ENCODE measurements at regions of chr19 and their contacts with region 1.

Region 1: DNA sequence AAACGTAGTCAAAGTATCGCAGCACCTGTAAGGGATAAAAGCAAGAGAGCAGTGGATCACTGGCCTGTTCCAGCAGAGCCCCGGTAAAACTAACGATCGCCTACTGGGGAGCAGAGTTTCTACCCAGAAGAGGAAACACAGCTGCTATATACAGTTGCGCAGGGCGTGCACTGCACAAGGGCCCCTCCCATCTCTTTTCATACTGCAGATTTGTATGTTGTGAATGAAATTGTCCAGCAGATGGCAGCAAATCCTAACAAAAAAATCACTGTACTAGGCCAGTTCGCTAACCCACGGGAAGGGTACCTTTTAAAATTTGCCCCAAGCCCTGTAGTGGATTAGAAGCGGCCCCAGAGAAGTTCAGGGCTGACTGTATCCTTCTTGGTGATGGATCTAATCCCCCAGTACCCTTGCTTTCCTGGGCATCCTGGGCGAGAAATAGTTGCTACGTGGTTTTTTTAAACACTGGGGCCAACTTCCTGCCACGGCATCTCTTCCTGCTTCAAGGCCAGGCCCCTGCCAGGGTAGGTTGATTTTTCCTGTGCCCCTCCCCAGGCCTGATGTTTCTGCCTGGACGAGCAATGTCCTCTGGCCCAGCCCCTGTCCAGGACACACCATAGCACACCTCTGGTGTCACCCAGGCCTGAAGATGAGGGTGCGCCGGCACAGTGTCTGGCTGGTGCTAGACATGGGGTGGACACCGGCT is 127.0 kb downstream of the IER2 start:
- DNase-seq: peak; percentile 89
- ATAC-seq: peak; percentile 94
- H3K4me3 ChIP-seq: peak overlapping the region in 2 of 5 experiments; percentile 25 to 42
- H3K4me3 Mint-ChIP-seq: peak overlapping the region; percentile 59
- H3K27ac ChIP-seq: peak overlapping the region; percentile 29 to 62
- H3K27ac Mint-ChIP-seq: peak overlapping the region; percentile 87
- H3K4me1 ChIP-seq: peaks cover 6 to 11% of the 10 kb centered on the region in 2 donors
- H3K4me1 Mint-ChIP-seq: peaks cover 17% of the 10 kb centered on the region
- H3K27me3 ChIP-seq: peaks cover 0 to 7% (median under 1%) of the 10 kb centered on the region in 4 experiments
- H3K27me3 Mint-ChIP-seq: peaks cover 17% of the 10 kb centered on the region
- CTCF ChIP-seq: peak; percentile 69

Region 2: GRCh38 chr19:13150187-13150930 is 126.9 kb before region 1 on chr19 and contains the starts of genes IER2 and STX10:
- CTCF ChIA-PET with region 1: interaction called, 5 read pairs
- POLR2A ChIA-PET with region 1: interaction called, 3 read pairs
- intact Hi-C with region 1: loop called (anchors 5 kb)
- DNase-seq: peak; percentile 96
- ATAC-seq: peak; percentile 53
- H3K4me3 ChIP-seq: peak within 1 kb of the TSS; percentile 82 to 100 (median 98)
- H3K4me3 Mint-ChIP-seq: peak within 1 kb of the TSS; percentile 92
- H3K27ac ChIP-seq: peak within 1 kb of the TSS; percentile 87 to 96
- H3K27ac Mint-ChIP-seq: peak within 1 kb of the TSS; percentile 94
- H3K4me1 ChIP-seq: peaks cover 9 to 32% of the 10 kb centered on the region in 2 donors
- H3K4me1 Mint-ChIP-seq: peaks cover 33% of the 10 kb centered on the region
- H3K27me3 ChIP-seq: no peaks in the 10 kb centered on the region
- H3K27me3 Mint-ChIP-seq: no peaks in the 10 kb centered on the region
- CTCF ChIP-seq: peak; percentile 66
- total RNA-seq, gene IER2: 181 and 189 TPM in 2 replicates
- total RNA-seq, gene STX10: 48.4 and 59.0 TPM in 2 replicates

Region 3: DNA sequence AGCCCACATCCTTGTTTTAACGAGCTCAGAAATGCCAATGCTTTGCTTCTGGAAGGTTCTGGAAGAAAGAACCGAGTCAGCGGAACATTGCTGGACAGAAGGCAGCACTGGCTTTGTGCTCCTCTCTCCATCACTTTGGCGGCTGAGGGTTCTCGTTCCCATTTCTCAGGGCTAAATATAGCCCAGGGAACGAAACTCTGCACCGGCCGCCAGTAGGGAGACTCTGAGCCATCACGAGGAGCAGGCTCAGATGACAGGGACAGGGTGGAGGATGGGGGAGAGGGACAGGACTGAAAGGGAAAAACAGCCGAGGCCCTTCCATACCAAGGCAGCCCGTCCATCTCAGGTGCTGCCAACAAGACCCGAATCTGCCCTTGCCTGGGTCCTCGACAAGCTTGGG is 62.6 kb after region 1 on chr19:
- CTCF ChIA-PET with region 1: no interaction called
- POLR2A ChIA-PET with region 1: no interaction called
- intact Hi-C with region 1: no loop called
- DNase-seq: no peak
- ATAC-seq: no peak
- H3K4me3 ChIP-seq: no peak overlapping the region
- H3K4me3 Mint-ChIP-seq: no peak overlapping the region
- H3K27ac ChIP-seq: no peak overlapping the region
- H3K27ac Mint-ChIP-seq: no peak overlapping the region
- H3K4me1 ChIP-seq: no peaks in the 10 kb centered on the region
- H3K4me1 Mint-ChIP-seq: no peaks in the 10 kb centered on the region
- H3K27me3 ChIP-seq: peaks cover 0 to 6% (median 0%) of the 10 kb centered on the region in 4 experiments
- H3K27me3 Mint-ChIP-seq: peaks cover 38% of the 10 kb centered on the region
- CTCF ChIP-seq: no peak

Region 4: GRCh38 chr19:13408889-13409518 is 131.7 kb after region 1 on chr19:
- CTCF ChIA-PET with region 1: no interaction called
- POLR2A ChIA-PET with region 1: no interaction called
- intact Hi-C with region 1: no loop called
- DNase-seq: no peak
- ATAC-seq: no peak
- H3K4me3 ChIP-seq: no peak overlapping the region
- H3K4me3 Mint-ChIP-seq: no peak overlapping the region
- H3K27ac ChIP-seq: no peak overlapping the region
- H3K27ac Mint-ChIP-seq: no peak overlapping the region
- H3K4me1 ChIP-seq: no peaks in the 10 kb centered on the region
- H3K4me1 Mint-ChIP-seq: no peaks in the 10 kb centered on the region
- H3K27me3 ChIP-seq: no peaks in the 10 kb centered on the region
- H3K27me3 Mint-ChIP-seq: peaks cover 15% of the 10 kb centered on the region
- CTCF ChIP-seq: no peak

Region 5: DNA sequence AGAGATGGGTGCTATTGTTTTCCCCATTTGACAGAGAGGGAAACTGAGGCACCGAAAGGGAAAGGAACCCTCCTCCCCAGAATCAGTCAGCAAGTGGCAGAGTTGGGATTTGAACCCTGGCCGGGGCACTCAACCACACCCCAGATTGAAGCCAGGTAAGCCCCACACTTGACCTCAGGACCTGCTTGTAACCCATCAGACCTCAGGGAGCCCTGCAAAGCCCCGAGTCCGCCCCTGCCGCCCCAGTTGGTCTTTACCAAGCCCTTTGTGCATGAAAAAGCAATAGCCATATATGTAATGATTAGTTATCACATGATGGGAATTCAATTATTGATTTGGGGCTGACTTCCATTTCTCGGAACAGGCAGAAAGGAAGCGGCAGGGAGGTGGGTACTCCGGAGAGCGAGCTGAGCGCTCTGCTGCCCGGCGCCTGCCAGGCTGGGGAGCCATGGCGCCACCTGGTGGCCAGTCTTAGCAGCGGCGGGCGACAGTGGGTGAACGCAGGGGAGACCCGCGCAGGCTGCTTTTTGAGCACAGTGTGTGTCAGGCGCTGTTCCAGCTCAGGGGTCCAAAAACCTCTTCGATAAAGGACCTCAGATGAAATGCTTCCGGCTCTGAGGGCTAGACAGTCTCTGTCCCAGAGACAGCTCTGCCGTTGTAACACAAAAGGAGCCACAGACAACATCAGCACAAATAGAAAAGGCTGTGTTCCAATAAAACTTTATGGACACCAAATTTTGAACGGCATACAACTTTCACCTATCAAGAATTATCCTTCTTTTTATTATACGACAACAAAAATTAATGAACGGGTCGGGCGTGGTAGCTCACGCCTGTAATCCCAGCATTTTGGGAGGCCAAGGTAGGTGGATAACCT is 311.9 kb after region 1 on chr19:
- CTCF ChIA-PET with region 1: interaction called, 73 read pairs
- POLR2A ChIA-PET with region 1: no interaction called
- intact Hi-C with region 1: no loop called
- DNase-seq: peak; percentile 85
- ATAC-seq: peak; percentile 99
- H3K4me3 ChIP-seq: no peak overlapping the region
- H3K4me3 Mint-ChIP-seq: no peak overlapping the region
- H3K27ac ChIP-seq: no peak overlapping the region
- H3K27ac Mint-ChIP-seq: no peak overlapping the region
- H3K4me1 ChIP-seq: peaks cover 0 to 7% of the 10 kb centered on the region in 2 donors
- H3K4me1 Mint-ChIP-seq: peaks cover 1% of the 10 kb centered on the region
- H3K27me3 ChIP-seq: peaks cover 0 to 8% (median 0%) of the 10 kb centered on the region in 4 experiments
- H3K27me3 Mint-ChIP-seq: peaks cover 25% of the 10 kb centered on the region
- CTCF ChIP-seq: peak; percentile 95

Region 6: DNA sequence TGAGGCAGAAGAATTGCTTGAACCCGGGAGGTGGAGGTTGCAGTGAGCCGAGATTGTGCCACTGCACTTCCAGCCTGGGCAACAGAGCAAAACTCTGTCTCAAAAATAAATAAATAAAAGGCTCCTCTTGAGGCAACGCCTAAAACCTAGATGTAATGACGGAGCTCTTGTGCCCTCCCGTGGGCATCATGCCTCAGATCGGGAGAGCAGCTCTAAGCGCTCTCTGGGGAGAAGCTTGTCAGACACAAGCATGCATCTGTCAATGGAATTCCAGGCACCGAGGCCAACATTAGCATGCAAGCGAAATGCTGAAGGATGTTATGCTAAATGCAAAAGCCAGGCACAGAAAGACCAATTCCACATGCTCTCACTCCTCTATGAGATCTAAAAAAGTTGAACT is 441.5 kb after region 1 on chr19:
- CTCF ChIA-PET with region 1: interaction called, 12 read pairs
- POLR2A ChIA-PET with region 1: no interaction called
- intact Hi-C with region 1: no loop called
- DNase-seq: no peak
- ATAC-seq: no peak
- H3K4me3 ChIP-seq: no peak overlapping the region
- H3K4me3 Mint-ChIP-seq: no peak overlapping the region
- H3K27ac ChIP-seq: no peak overlapping the region
- H3K27ac Mint-ChIP-seq: no peak overlapping the region
- H3K4me1 ChIP-seq: no peaks in the 10 kb centered on the region
- H3K4me1 Mint-ChIP-seq: peaks cover 2% of the 10 kb centered on the region
- H3K27me3 ChIP-seq: peaks cover 0 to 5% (median 3%) of the 10 kb centered on the region in 4 experiments
- H3K27me3 Mint-ChIP-seq: peaks cover 16% of the 10 kb centered on the region
- CTCF ChIP-seq: no peak

Region 7: GRCh38 chr19:14091081-14091812 is 814.0 kb after region 1 on chr19:
- CTCF ChIA-PET with region 1: no interaction called
- POLR2A ChIA-PET with region 1: no interaction called
- intact Hi-C with region 1: loop called (anchors 10 kb)
- DNase-seq: peak; percentile 89
- ATAC-seq: peak; percentile 72
- H3K4me3 ChIP-seq: peak overlapping the region; percentile 81 to 89 (median 82)
- H3K4me3 Mint-ChIP-seq: peak overlapping the region; percentile 100
- H3K27ac ChIP-seq: peak overlapping the region; percentile 69 to 87
- H3K27ac Mint-ChIP-seq: peak overlapping the region; percentile 99
- H3K4me1 ChIP-seq: peaks cover 11 to 18% of the 10 kb centered on the region in 2 donors
- H3K4me1 Mint-ChIP-seq: peaks cover 15% of the 10 kb centered on the region
- H3K27me3 ChIP-seq: no peaks in the 10 kb centered on the region
- H3K27me3 Mint-ChIP-seq: no peaks in the 10 kb centered on the region
- CTCF ChIP-seq: peak; percentile 21